Right lobe of liver (tissue), 6 donors: ENCODE measurements at regions of chr20 and their contacts with region 1.

Region 1: GRCh38 chr20:47205577-47206498 is 150.7 kb downstream of the ZMYND8 start:
- DNase-seq: peak; percentile 70 to 80 (median 76)
- ATAC-seq: peak; percentile 88 to 93 (median 92)
- H3K4me3 ChIP-seq: no peak overlapping the region
- H3K27ac ChIP-seq: no peak overlapping the region
- H3K4me1 ChIP-seq: peaks cover 0 to 4% (median 0%) of the 10 kb centered on the region in 4 donors
- H3K27me3 ChIP-seq: no peaks in the 10 kb centered on the region
- CTCF ChIP-seq: peak; percentile 60 to 99 (median 74)
- POLR2A ChIP-seq: no peak

Region 2: GRCh38 chr20:47099825-47100441 is 105.9 kb before region 1 on chr20:
- intact Hi-C with region 1: no loop called
- DNase-seq: no peak
- ATAC-seq: no peak
- H3K4me3 ChIP-seq: no peak overlapping the region
- H3K27ac ChIP-seq: no peak overlapping the region
- H3K4me1 ChIP-seq: no peaks in the 10 kb centered on the region
- H3K27me3 ChIP-seq: no peaks in the 10 kb centered on the region
- CTCF ChIP-seq: no peak
- POLR2A ChIP-seq: no peak

Region 3: GRCh38 chr20:47258745-47259695 is 53.2 kb after region 1 on chr20:
- intact Hi-C with region 1: loop called in 1 of 2 experiments (anchors 10 kb)
- DNase-seq: no peak
- ATAC-seq: peak in 3 of 4 donors; percentile 23 to 26 (median 23)
- H3K4me3 ChIP-seq: no peak overlapping the region
- H3K27ac ChIP-seq: no peak overlapping the region
- H3K4me1 ChIP-seq: peaks cover 0 to 11% (median 5%) of the 10 kb centered on the region in 4 donors
- H3K27me3 ChIP-seq: no peaks in the 10 kb centered on the region
- CTCF ChIP-seq: no peak
- POLR2A ChIP-seq: no peak